Endothelial cell of umbilical vein (primary cell): ENCODE measurements at regions of chr11 and their contacts with region 1.

Region 1: DNA sequence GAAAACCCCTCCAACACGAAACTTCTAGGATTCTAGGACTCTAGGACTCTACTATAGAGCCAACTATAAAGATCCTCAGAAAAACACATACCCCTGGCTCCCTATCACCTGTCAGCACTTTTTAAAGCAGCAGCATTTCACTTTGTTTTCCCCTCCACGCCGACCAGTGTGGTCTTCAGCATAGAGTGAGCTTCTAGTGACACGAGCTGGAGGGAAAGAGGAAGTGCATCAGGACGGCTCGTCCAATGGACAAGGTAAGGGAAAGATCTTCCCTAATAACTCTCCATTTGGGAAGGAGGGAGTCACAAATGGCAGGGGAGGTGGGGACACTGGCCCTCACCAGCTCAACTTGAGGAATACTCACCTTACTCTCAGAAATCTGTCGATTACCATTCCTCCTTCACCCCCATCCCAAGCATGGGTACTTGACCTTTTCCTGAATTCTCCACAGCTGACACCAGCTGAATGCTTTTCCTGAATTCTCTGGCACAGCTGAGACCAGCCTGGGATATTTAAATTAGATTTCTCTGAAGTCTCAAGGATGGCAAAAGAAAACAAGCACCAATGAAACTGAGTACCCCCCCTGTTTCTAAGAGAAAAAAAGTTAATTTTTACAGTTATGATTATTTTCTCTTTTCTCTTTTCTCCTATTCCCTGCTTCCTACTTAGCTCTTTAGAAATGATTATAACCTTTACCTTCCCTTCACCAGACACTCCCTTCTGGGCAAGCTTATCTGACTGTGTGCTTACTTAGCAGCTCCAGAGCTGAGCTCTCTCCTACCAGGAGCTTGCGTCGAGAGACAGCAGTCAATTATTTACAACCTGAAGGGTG is 33.3 kb upstream of the NNMT start:
- DNase-seq: peak; percentile 55
- H3K4me3 ChIP-seq: no peak overlapping the region
- H3K27ac ChIP-seq: no peak overlapping the region
- H3K4me1 ChIP-seq: no peaks in the 10 kb centered on the region
- H3K27me3 ChIP-seq: peaks cover 9 to 14% of the 10 kb centered on the region in 2 experiments
- CTCF ChIP-seq: peak; percentile 72 to 73
- POLR2A ChIP-seq: no peak

Region 2: GRCh38 chr11:113806406-113806805 is 456.5 kb before region 1 on chr11:
- CTCF ChIA-PET with region 1: interaction called, 80 read pairs
- POLR2A ChIA-PET with region 1: no interaction called
- dilution Hi-C with region 1: no loop called
- intact Hi-C with region 1: loop called (anchors 1 kb)
- DNase-seq: peak; percentile 30
- H3K4me3 ChIP-seq: no peak overlapping the region
- H3K27ac ChIP-seq: no peak overlapping the region
- H3K4me1 ChIP-seq: no peaks in the 10 kb centered on the region
- H3K27me3 ChIP-seq: no peaks in the 10 kb centered on the region
- CTCF ChIP-seq: peak; percentile 35 to 65
- POLR2A ChIP-seq: no peak

Region 3: DNA sequence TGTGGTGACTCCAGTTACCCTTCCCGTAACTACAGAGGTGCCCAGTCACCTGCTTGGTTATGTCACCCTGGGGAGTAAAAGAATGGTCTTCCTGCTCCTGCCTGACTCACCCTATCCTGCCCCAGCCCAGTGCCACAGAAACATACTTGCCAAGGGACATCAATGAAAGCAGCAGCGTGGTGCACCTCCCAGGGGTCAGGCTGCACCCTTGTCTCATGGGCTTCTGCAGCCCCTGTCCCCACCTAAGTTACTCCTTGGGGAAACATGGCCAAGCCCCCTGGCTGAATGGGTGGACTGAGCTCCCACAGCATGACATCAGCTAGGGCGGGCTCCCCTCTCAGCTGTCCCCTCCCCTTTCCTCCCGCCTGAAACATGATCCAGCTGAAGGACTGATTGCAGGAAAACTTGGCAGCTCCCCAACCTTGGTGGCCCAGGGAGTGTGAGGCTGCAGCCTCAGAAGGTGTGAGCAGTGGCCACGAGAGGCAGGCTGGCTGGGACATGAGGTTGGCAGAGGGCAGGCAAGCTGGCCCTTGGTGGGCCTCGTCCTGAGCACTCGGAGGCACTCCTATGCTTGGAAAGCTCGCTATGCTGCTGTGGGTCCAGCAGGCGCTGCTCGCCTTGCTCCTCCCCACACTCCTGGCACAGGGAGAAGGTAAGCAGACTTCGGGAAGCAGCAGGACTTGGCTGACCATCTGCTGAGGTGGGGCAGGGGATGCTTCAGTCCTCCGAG is 288.0 kb before region 1 on chr11 and contains the start of gene HTR3A:
- CTCF ChIA-PET with region 1: interaction called, 21 read pairs
- POLR2A ChIA-PET with region 1: no interaction called
- dilution Hi-C with region 1: no loop called
- intact Hi-C with region 1: no loop called
- DNase-seq: peak; percentile 57
- H3K4me3 ChIP-seq: no peak within 1 kb of the TSS
- H3K27ac ChIP-seq: no peak within 1 kb of the TSS
- H3K4me1 ChIP-seq: peaks cover 4% of the 10 kb centered on the region
- H3K27me3 ChIP-seq: peaks cover 8 to 9% of the 10 kb centered on the region in 2 experiments
- CTCF ChIP-seq: no peak
- POLR2A ChIP-seq: no peak
- total RNA-seq, gene HTR3A: not detected in 2 replicates

Region 4: GRCh38 chr11:114026355-114026754 is 236.5 kb before region 1 on chr11:
- CTCF ChIA-PET with region 1: interaction called, 244 read pairs
- POLR2A ChIA-PET with region 1: interaction called, 3 read pairs
- dilution Hi-C with region 1: loop called (anchors 25 kb)
- intact Hi-C with region 1: loop called (anchors 1 kb)
- DNase-seq: no peak
- H3K4me3 ChIP-seq: no peak overlapping the region
- H3K27ac ChIP-seq: no peak overlapping the region
- H3K4me1 ChIP-seq: no peaks in the 10 kb centered on the region
- H3K27me3 ChIP-seq: peaks cover 17 to 22% of the 10 kb centered on the region in 2 experiments
- CTCF ChIP-seq: peak in 1 of 2 donors; percentile 8
- POLR2A ChIP-seq: no peak

Region 5: DNA sequence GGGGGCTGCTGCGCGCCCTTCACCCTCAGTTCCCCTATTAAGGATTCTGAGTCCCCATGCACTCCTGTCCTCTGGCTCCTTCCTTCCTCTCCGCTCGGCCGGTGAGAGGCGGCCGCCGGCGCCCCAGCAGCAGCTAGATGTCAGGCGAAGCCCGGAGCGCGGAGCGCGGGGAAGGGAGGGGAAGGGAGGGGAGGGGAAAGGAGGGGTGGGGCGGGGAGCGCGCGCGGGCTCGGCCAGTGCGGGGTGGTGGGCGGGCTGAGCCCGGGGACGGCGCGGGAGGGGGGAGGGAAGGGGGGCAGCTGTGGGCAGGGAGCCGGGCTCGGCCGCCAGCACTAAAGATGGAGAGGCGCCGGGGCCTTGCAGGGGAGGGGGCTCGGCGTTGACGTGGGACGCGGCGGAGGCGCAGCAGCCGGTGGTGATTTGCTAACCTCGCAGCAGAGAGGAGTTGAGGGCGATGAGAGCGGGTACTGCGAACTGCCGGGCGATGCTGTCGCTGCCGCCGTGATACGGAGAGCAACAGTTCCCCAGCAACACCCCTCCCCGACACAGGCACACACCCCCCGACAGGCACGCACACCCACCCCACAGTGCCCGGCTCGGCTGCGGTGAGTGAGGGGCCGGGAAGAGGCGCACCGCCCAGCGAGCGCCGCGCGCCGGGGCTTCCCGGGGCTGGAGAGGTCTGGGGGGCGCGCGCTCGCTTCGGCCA is 203.5 kb before region 1 on chr11 and contains the start of gene ZBTB16:
- CTCF ChIA-PET with region 1: interaction called, 90 read pairs
- POLR2A ChIA-PET with region 1: no interaction called
- dilution Hi-C with region 1: no loop called
- intact Hi-C with region 1: loop called (anchors 1 kb)
- DNase-seq: peak; percentile 83
- H3K4me3 ChIP-seq: peak within 1 kb of the TSS; percentile 86 to 90 (median 87)
- H3K27ac ChIP-seq: peak within 1 kb of the TSS; percentile 78
- H3K4me1 ChIP-seq: peaks cover 8% of the 10 kb centered on the region
- H3K27me3 ChIP-seq: peaks cover 0 to 2% of the 10 kb centered on the region in 2 experiments
- CTCF ChIP-seq: peak; percentile 4 to 29
- POLR2A ChIP-seq: no peak
- total RNA-seq, gene ZBTB16: 19.5 and 20.3 TPM in 2 replicates

Region 6: GRCh38 chr11:114180301-114181055 is 82.4 kb before region 1 on chr11:
- CTCF ChIA-PET with region 1: interaction called, 61 read pairs
- POLR2A ChIA-PET with region 1: no interaction called
- dilution Hi-C with region 1: no loop called
- intact Hi-C with region 1: loop called (anchors 1 kb)
- DNase-seq: peak; percentile 59
- H3K4me3 ChIP-seq: no peak overlapping the region
- H3K27ac ChIP-seq: peak overlapping the region; percentile 90
- H3K4me1 ChIP-seq: peaks cover 31% of the 10 kb centered on the region
- H3K27me3 ChIP-seq: no peaks in the 10 kb centered on the region
- CTCF ChIP-seq: peak; percentile 52 to 61
- POLR2A ChIP-seq: no peak

Region 7: DNA sequence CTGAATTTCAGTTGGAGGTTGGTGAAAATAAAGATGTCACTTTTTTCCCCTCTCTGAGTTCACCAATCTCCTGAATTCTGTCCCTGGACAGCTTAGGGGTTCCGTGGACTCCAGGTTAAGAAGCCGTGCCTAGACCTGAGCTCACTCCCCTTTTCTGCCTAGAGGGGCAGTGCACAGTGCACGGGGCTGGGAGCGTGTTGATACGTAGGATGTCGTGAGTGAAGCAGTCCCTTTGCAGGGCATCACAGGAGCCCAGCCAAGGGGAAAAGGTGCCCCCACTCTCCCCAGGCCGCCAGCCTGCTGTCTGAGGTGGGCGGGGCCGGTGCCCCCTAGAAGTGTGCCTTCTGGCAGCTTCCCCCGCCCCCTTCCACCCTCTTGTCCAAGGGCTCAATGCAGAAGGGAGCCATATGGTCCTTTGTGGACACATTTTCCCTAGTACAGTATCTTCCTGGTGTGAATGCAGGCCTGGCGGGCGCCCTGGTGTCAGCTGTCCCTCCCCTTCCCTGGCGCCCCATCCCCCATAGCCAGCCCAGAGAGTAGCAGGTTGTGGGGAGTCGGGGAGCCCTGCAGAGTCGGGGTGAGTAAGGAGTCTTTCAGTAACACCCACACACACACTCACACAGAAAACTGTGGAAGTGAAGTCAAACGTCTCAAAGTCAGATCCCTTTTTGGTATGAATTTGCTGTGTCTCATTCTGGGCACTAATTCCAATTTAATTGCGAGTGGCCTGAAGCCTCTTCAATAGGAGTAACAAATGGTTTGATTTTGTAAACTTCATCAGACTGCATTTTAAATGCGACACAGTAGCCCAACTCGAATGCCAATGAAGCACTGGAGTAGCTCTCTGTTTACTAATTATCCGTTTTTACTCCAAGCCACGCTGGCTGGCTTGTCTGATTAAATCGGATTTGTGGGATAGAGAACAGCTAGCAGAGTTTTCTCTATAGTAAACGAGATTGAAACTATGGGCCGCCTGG is 34.2 kb before region 1 on chr11:
- CTCF ChIA-PET with region 1: interaction called, 11 read pairs
- POLR2A ChIA-PET with region 1: no interaction called
- dilution Hi-C with region 1: no loop called
- intact Hi-C with region 1: no loop called
- DNase-seq: no peak
- H3K4me3 ChIP-seq: no peak overlapping the region
- H3K27ac ChIP-seq: no peak overlapping the region
- H3K4me1 ChIP-seq: no peaks in the 10 kb centered on the region
- H3K27me3 ChIP-seq: no peaks in the 10 kb centered on the region
- CTCF ChIP-seq: no peak
- POLR2A ChIP-seq: no peak